ENCODE measurements at regions of chr18 and their contacts with region 1.

Region 1: GRCh38 chr18:26656944-26657536 is 108.7 kb upstream of the KCTD1 start:
- DNase-seq: peak; percentile 71
- H3K4me3 ChIP-seq: peak overlapping the region; percentile 44 to 91 (median 84)
- H3K27ac ChIP-seq: peak overlapping the region; percentile 82 to 89 (median 84)
- H3K4me1 ChIP-seq: peaks cover 0 to 32% (median 15%) of the 10 kb centered on the region in 4 donors
- H3K27me3 ChIP-seq: peaks cover 51% of the 10 kb centered on the region
- CTCF ChIP-seq: peak in 3 of 5 experiments; percentile 20 to 35 (median 22)
- EP300 ChIP-seq: no peak
- POLR2A ChIP-seq: peak; percentile 77

Region 2: GRCh38 chr18:26307189-26307773 is 349.8 kb before region 1 on chr18:
- in situ Hi-C with region 1: no loop called
- intact Hi-C with region 1: no loop called
- DNase-seq: no peak
- H3K4me3 ChIP-seq: no peak overlapping the region
- H3K27ac ChIP-seq: no peak overlapping the region
- H3K4me1 ChIP-seq: no peaks in the 10 kb centered on the region
- H3K27me3 ChIP-seq: no peaks in the 10 kb centered on the region
- CTCF ChIP-seq: peak; percentile 40 to 53 (median 51)
- EP300 ChIP-seq: no peak
- POLR2A ChIP-seq: no peak

Region 3: DNA sequence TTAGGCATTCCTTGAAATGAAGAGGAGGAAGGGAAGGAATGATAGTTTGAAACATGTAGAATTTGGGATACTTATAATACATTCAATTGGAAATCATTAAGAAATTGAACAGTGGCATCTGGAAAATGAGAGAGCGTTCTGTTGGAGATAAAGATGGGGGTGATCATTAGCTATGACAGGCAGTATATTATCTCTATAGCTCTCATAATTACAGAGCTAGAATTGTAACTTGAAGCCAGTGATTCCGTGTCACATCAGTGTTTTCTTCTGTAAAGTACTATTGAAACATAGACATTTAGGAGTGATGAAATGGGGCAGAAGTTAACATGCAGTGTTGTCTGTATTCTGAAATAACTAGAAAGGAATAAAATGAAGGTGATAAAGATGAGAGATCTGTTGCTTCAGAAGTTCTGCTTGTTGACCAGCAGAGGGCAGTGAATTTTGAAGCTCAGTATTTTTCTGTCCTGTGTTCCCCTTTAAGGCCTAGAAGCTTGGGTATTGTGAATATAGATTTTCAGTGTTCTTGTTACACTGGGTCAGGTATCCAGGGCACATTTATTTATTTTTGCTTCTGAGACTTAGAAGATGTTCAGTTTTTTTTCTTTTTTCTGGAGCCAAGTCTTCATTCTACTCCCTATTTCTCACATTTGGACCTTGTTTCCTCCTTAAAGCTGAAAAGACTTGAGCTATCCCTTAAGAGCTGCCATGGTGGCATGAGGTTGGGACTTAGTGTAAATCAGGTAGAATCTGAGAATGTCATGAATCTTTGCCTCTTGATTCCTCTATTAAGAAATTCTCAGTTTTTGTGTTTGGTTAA is 273.4 kb before region 1 on chr18:
- in situ Hi-C with region 1: loop called in 1 of 4 experiments (anchors 25 kb)
- intact Hi-C with region 1: loop called (anchors 10 kb)
- DNase-seq: no peak
- H3K4me3 ChIP-seq: no peak overlapping the region
- H3K27ac ChIP-seq: no peak overlapping the region
- H3K4me1 ChIP-seq: peaks cover 0 to 7% (median 0%) of the 10 kb centered on the region in 4 donors
- H3K27me3 ChIP-seq: no peaks in the 10 kb centered on the region
- CTCF ChIP-seq: peak; percentile 60 to 79 (median 70)
- EP300 ChIP-seq: no peak
- POLR2A ChIP-seq: no peak

Region 4: DNA sequence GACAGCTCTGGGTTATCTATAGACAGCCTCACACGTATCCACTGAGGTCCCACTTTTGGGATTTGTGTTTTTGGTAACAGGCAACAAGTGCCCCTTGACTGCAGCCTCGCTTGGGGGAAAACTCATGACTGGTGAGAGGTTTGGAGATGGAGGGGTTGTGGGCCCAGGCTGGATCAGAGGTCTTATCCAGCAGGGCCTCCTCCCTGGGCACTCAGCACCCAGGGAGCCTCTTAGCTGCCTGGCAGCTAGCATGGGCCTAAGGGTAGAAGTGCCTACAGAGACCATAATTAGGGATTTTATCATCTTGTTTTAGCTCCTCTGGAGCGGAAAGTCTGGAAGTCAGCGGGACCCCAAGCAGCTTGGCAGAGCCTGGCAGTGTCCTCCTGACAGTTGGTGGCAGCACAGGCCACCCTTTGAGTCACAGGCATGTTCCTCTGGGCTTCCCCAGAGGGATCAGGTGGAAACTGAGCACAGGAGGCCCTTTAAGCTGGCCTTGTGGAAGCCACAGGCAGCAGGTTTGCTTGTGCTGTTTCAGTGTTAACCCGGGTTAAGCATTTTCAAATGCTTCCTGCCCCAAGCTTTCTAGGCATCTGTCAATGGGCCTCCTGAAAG is 251.7 kb before region 1 on chr18:
- in situ Hi-C with region 1: loop called in 1 of 4 experiments (anchors 10 kb)
- intact Hi-C with region 1: no loop called
- DNase-seq: peak; percentile 15
- H3K4me3 ChIP-seq: no peak overlapping the region
- H3K27ac ChIP-seq: no peak overlapping the region
- H3K4me1 ChIP-seq: no peaks in the 10 kb centered on the region
- H3K27me3 ChIP-seq: no peaks in the 10 kb centered on the region
- CTCF ChIP-seq: peak in 1 of 5 experiments; percentile 11
- EP300 ChIP-seq: no peak
- POLR2A ChIP-seq: no peak

Region 5: DNA sequence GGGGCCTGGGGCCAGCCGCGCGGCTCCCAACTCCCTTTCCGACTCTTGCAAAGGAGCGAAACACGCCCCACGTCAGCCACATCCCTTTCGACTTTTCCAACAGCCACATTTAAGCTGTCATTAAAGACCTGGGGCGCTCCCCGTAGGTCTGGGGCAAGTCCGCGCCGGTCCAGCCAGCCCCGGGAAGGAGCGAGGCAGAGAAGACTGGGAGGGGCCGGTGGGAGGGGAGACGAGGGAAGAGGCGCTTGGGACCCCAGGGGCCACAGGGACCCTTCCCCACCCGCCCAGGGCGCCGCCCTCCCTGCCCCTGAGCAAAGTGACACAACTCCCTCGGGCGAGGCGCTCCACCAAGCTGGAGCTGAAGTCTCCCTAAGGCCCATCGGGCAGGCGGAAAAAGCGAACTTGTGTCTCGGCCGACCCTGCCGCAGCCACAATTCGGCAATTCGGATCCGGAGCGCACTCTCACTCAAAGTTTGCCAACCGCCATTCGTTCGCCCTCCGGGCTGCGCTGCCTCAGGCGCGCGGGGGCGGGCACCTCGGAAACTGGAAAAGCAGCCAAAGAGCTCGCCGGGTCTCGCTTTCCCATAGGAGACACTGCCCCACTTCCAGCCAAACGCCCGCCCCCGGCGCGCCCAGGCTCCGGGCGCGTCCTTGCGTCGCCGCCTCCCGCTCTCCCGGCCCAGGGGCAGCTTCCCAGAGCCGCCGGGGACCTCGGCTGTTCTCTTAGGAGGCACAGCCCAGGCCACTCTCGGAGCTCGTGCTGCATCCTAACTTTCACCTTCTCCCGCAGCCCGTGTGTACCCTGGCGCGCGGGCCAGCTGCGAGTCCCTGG is 107.6 kb before region 1 on chr18:
- in situ Hi-C with region 1: no loop called
- intact Hi-C with region 1: loop called (anchors 10 kb)
- DNase-seq: peak; percentile 61
- H3K4me3 ChIP-seq: peak overlapping the region; percentile 60 to 95 (median 76)
- H3K27ac ChIP-seq: peak overlapping the region; percentile 60 to 77 (median 70)
- H3K4me1 ChIP-seq: peaks cover 10 to 49% (median 34%) of the 10 kb centered on the region in 4 donors
- H3K27me3 ChIP-seq: peaks cover 55% of the 10 kb centered on the region
- CTCF ChIP-seq: no peak
- EP300 ChIP-seq: no peak
- POLR2A ChIP-seq: peak; percentile 45

Region 6: GRCh38 chr18:26677957-26678356 is 20.9 kb after region 1 on chr18:
- in situ Hi-C with region 1: no loop called
- intact Hi-C with region 1: no loop called
- DNase-seq: no peak
- H3K4me3 ChIP-seq: no peak overlapping the region
- H3K27ac ChIP-seq: no peak overlapping the region
- H3K4me1 ChIP-seq: no peaks in the 10 kb centered on the region
- H3K27me3 ChIP-seq: no peaks in the 10 kb centered on the region
- CTCF ChIP-seq: no peak
- EP300 ChIP-seq: no peak
- POLR2A ChIP-seq: no peak

Region 7: GRCh38 chr18:26710470-26711096 is 53.5 kb after region 1 on chr18:
- in situ Hi-C with region 1: no loop called
- intact Hi-C with region 1: no loop called
- DNase-seq: no peak
- H3K4me3 ChIP-seq: no peak overlapping the region
- H3K27ac ChIP-seq: no peak overlapping the region
- H3K4me1 ChIP-seq: peaks cover 0 to 4% (median 0%) of the 10 kb centered on the region in 4 donors
- H3K27me3 ChIP-seq: no peaks in the 10 kb centered on the region
- CTCF ChIP-seq: no peak
- EP300 ChIP-seq: no peak
- POLR2A ChIP-seq: no peak

Region 8: DNA sequence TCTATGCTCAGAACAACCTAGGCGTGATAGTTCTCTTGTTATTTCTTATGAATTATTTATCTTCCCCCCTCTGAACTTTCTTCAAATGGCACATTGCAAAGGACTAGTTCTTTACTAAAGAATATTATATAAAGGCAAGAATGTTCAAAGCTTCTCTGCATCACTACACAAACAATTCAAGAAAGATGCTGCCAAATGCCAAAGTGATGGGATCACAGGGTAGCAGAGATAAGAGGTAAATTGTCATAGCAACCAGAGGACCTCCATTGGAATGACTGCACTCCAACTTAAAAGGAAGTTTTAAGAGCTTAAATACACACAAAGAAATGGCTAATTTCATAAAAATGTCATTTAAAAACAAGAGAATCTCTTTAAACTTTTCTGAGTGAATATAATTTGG is 135.6 kb after region 1 on chr18:
- in situ Hi-C with region 1: no loop called
- intact Hi-C with region 1: no loop called
- DNase-seq: no peak
- H3K4me3 ChIP-seq: no peak overlapping the region
- H3K27ac ChIP-seq: no peak overlapping the region
- H3K4me1 ChIP-seq: no peaks in the 10 kb centered on the region
- H3K27me3 ChIP-seq: no peaks in the 10 kb centered on the region
- CTCF ChIP-seq: no peak
- EP300 ChIP-seq: no peak
- POLR2A ChIP-seq: no peak